Heart right ventricle (tissue), 16 donors: ENCODE measurements at regions of chr12 and their contacts with region 1.

Region 1: DNA sequence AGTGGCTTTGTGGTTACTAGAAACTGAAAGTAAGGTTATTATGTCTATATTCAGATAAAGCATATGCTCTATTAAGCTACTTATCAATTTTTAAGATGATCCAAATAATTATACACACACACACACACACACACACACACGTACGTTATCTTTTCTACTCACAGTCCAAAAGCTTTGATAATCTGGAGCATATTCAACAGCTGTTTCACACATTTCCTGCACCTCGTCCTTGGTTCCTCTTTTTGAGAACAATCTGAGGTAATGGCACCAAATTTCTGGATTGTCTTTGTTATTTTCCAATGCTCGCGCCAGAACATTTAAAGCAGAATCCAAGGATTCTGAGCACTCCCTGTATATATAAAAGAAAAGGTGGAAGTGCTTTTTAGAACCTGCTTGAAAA is 37.5 kb downstream of the ZFC3H1 start:
- DNase-seq: peak in 1 of 2 donors; percentile 17
- ATAC-seq: peak in 6 of 8 donors; percentile 28 to 64 (median 56)
- H3K4me3 ChIP-seq: no peak overlapping the region
- H3K27ac ChIP-seq: peak overlapping the region in 5 of 10 donors; percentile 9 to 65 (median 23)
- H3K4me1 ChIP-seq: peaks cover 0 to 26% (median 9%) of the 10 kb centered on the region in 9 donors
- H3K27me3 ChIP-seq: no peaks in the 10 kb centered on the region
- CTCF ChIP-seq: no peak

Region 2: GRCh38 chr12:71610031-71610795 is 15.9 kb before region 1 on chr12:
- intact Hi-C with region 1: loop called in 2 of 10 experiments (anchors 1 to 2 kb)
- DNase-seq: no peak
- ATAC-seq: no peak
- H3K4me3 ChIP-seq: no peak overlapping the region
- H3K27ac ChIP-seq: no peak overlapping the region
- H3K4me1 ChIP-seq: peaks cover 0 to 5% (median 0%) of the 10 kb centered on the region in 9 donors
- H3K27me3 ChIP-seq: no peaks in the 10 kb centered on the region
- CTCF ChIP-seq: no peak

Region 3: DNA sequence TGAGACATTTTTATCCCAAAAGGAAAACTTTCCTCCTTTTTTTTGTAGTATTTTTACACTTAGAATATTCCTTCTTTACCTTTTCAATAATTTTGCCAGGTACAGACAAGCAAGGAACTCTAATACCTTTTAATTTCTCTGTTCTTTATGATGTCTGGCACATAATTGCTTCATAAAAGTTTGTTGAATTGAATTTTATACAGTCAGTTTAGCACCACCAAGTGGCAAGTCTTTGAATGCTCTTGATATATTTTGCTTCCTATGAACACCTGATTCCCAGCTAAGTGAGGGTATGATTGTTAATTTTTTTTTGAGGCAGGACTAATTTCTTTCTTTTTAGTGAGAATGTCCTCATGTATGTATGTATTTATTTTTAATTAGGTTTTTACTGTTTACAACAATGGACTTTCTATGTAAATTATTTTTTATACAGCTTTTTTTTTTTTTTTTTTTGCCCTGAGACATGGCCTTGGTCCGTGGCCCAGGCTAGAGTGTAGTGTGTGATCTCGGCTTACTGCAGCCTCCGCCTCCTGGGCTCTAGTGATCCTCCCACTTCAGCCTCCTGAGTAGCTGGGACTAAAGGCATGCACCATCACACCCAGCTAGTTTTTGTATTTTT is 220.3 kb after region 1 on chr12:
- intact Hi-C with region 1: no loop called
- DNase-seq: no peak
- ATAC-seq: no peak
- H3K4me3 ChIP-seq: no peak overlapping the region
- H3K27ac ChIP-seq: peak overlapping the region in 2 of 10 donors; percentile 23 to 38
- H3K4me1 ChIP-seq: peaks cover 0 to 87% (median 67%) of the 10 kb centered on the region in 9 donors
- H3K27me3 ChIP-seq: no peaks in the 10 kb centered on the region
- CTCF ChIP-seq: peak in 7 of 9 donors; percentile 23 to 68 (median 59)